ENCODE measurements at regions of chr1 and their contacts with region 1.

Region 1: DNA sequence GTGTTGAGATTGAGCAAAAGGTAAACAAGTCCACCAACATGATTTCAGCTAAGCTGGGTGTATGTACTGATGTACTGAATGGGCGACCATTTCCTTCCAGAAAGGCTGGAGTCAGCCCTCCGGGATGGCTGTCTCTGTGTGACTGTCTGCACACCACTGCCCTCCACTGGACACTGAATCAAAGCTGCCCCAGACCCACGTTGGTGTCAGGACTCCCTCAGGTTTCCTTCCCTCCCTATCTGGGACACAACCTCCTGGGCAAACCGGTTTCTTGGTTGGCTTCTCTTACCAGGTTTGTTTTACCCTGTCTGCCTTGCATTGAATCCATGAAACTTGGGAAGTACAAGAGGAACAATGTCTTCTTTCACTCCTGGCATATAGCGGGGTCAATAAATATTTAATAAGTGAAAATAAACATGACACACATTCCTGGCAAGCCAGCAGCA is 5.3 kb upstream of the SRP9 start:
- DNase-seq: peak; percentile 76 to 78
- ATAC-seq: peak; percentile 83 to 89
- H3K4me3 ChIP-seq: no peak overlapping the region
- H3K27ac ChIP-seq: peak overlapping the region in 2 of 4 donors; percentile 25 to 59
- H3K4me1 ChIP-seq: peaks cover 21 to 29% of the 10 kb centered on the region in 2 donors
- H3K27me3 ChIP-seq: no peaks in the 10 kb centered on the region
- CTCF ChIP-seq: peak; percentile 79 to 92 (median 88)
- POLR2A ChIP-seq: no peak

Region 2: GRCh38 chr1:225366552-225366951 is 405.8 kb before region 1 on chr1:
- in situ Hi-C with region 1: no loop called
- intact Hi-C with region 1: no loop called
- DNase-seq: no peak
- ATAC-seq: no peak
- H3K4me3 ChIP-seq: no peak overlapping the region
- H3K27ac ChIP-seq: no peak overlapping the region
- H3K4me1 ChIP-seq: no peaks in the 10 kb centered on the region
- H3K27me3 ChIP-seq: peaks cover 0 to 3% (median 0%) of the 10 kb centered on the region in 3 donors
- CTCF ChIP-seq: no peak
- POLR2A ChIP-seq: no peak

Region 3: DNA sequence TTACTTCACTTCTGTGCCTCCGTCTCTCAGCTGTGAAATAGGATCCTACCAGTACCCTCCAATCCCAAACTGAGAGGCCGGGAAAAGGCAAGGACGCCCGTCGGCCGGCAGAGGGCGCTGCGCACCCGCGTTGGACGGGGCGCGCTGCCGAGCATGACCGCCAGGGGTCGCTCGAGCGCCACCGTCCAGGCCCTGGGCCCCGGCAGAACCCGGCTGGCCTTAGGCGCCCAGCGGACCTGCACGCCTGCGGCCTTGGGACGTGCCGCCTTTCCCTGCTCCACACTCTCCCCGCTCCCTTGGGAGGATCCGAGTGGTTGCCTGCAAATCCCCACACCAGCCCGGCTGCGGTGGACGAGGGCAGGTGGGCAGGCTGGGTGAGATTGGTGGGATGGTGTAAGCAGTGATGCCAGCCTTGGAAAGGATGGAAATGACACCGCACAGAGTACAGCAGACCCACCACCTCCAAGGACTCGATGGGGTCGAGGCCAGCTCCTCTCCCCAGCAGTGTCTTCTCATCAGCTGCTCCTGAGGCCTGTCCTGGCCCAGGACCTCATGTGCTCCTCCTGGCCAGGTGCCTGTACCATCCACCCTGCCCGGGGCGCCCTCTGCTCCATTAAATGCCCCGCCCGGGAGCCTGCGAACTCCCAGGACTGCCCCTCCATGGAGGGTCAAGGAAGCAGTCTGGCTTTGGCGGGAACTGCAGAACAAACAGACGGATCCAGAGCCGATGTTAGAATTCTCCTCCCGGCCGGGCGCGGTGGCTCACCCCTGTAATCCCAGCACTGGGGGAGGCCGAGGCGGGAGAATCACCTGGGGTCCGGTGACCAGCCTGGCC is 297.1 kb before region 1 on chr1:
- in situ Hi-C with region 1: loop called (anchors 5 to 10 kb)
- intact Hi-C with region 1: loop called (anchors 1 kb)
- DNase-seq: peak; percentile 26 to 39
- ATAC-seq: peak; percentile 78 to 90
- H3K4me3 ChIP-seq: peak overlapping the region in 2 of 4 donors; percentile 30 to 39
- H3K27ac ChIP-seq: no peak overlapping the region
- H3K4me1 ChIP-seq: peaks cover 2 to 10% of the 10 kb centered on the region in 2 donors
- H3K27me3 ChIP-seq: no peaks in the 10 kb centered on the region
- CTCF ChIP-seq: peak; percentile 100
- POLR2A ChIP-seq: no peak

Region 4: GRCh38 chr1:225554216-225554812 is 218.0 kb before region 1 on chr1:
- in situ Hi-C with region 1: loop called in 2 of 4 experiments (anchors 5 to 10 kb)
- intact Hi-C with region 1: loop called (anchors 5 kb)
- DNase-seq: no peak
- ATAC-seq: peak in 1 of 2 donors; percentile 44
- H3K4me3 ChIP-seq: no peak overlapping the region
- H3K27ac ChIP-seq: peak overlapping the region in 1 of 4 donors; percentile 1
- H3K4me1 ChIP-seq: peaks cover 9 to 28% of the 10 kb centered on the region in 2 donors
- H3K27me3 ChIP-seq: no peaks in the 10 kb centered on the region
- CTCF ChIP-seq: peak in 4 of 5 experiments; percentile 34 to 52 (median 47)
- POLR2A ChIP-seq: no peak

Region 5: DNA sequence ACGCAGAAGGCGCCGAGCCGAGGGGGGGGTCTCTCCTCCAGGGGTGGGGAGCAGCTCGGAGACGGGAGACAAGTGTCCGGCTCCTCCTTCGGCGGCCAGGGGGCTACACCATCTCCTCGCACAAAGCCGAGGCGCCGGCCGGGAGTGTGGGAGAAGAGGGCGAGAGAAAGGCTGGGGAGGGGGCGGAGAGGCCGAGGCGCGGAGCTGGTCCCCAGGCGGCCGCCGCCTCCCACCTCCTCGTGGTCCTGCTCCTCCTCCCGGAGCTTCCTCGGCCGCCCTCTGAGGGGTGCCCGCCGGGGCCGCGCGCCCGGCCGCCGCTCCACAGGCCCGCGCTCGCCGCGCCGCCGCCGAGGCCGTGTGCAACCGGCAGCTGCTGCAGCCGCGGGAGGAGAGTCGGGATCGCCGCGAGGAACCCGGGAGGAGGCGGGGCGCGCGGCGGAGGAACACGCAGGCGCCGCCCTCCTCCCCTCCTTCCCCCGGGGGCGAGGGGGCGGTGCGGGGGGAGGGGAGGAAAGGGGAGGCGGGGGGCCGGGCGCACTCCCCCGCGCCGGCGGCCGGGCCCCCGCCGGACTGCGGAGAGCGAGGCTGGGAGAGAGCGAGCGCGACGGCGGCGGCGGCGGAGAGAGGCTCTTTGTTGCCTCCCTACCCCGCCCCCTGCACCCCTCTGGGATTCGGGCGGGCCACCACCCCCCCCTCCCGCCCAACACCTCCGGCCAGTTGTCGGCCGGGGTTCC is 119.5 kb before region 1 on chr1 and contains the start of gene ENAH:
- in situ Hi-C with region 1: loop called in 1 of 4 experiments (anchors 10 kb)
- intact Hi-C with region 1: loop called (anchors 2 kb)
- DNase-seq: peak; percentile 78 to 82
- ATAC-seq: peak; percentile 54 to 65
- H3K4me3 ChIP-seq: peak within 1 kb of the TSS; percentile 66 to 92 (median 84)
- H3K27ac ChIP-seq: peak within 1 kb of the TSS; percentile 97 to 98 (median 98)
- H3K4me1 ChIP-seq: peaks cover 38 to 56% of the 10 kb centered on the region in 2 donors
- H3K27me3 ChIP-seq: no peaks in the 10 kb centered on the region
- CTCF ChIP-seq: peak in 1 of 5 experiments; percentile 10
- POLR2A ChIP-seq: peak; percentile 97 to 98
- total RNA-seq, gene ENAH: 56.1 to 112 (median 62.2) TPM

Region 6: DNA sequence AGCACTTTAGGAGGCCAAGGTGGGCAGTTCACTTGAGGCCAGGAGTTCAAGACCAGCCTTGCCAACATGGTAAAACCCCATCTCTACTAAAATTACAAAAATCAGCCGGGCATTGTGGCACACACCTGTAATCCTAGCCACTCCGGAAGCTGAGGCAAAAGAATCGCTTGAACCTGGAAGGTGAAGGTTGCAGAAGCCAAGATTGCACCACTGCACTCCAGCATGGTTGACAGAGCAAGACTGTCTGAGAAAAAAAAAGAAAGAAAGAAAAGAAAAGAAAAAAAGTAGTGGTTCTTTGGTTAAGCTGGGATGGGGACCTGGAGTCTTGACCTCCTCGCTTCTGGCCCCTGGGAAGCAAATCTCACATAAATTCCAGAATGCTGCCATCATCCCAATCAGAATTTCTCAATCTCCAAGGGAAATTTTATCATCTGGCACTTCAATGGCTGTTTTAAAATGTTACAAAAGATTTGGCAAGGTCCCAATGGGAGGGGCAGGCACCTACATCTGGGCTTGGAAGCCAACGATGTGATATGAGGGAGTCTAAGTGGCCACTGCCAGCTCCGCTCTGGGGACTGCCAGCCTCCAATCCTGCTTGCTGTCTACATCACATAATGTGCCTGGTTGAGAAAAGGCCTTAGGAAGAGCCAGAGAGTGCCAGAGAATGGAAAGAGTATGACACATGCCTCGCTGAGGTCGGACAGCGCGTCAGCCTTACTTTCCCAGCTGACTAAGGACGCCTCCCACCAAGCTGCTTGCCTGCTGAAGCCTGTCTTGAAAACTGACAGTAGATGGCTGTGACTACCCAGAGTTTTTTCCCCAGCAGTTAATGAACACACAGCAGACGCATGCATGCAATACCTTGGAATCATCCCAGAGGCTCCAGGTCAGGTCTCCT is 36.8 kb before region 1 on chr1:
- in situ Hi-C with region 1: no loop called
- intact Hi-C with region 1: loop called (anchors 2 kb)
- DNase-seq: peak; percentile 76 to 88
- ATAC-seq: peak; percentile 94 to 96
- H3K4me3 ChIP-seq: peak overlapping the region in 1 of 4 donors; percentile 5
- H3K27ac ChIP-seq: peak overlapping the region; percentile 57 to 84 (median 74)
- H3K4me1 ChIP-seq: peaks cover 14 to 21% of the 10 kb centered on the region in 2 donors
- H3K27me3 ChIP-seq: no peaks in the 10 kb centered on the region
- CTCF ChIP-seq: no peak
- POLR2A ChIP-seq: no peak